Activated T-helper 1 cell treated with anti-CD3 and anti-CD28 coated beads, Interleukin-12 subunit alpha, Interleukin-12 subunit beta, Interleukin-2, Interleukin-4 antibody, amounts not matched to agents 30 ng/mL and 10 ng/mL and 1 ng/mL, durations not matched to agents 14 hours and 24 hours and 36 hours (primary cell): ENCODE measurements at regions of chr10 and their contacts with region 1.

Region 1: DNA sequence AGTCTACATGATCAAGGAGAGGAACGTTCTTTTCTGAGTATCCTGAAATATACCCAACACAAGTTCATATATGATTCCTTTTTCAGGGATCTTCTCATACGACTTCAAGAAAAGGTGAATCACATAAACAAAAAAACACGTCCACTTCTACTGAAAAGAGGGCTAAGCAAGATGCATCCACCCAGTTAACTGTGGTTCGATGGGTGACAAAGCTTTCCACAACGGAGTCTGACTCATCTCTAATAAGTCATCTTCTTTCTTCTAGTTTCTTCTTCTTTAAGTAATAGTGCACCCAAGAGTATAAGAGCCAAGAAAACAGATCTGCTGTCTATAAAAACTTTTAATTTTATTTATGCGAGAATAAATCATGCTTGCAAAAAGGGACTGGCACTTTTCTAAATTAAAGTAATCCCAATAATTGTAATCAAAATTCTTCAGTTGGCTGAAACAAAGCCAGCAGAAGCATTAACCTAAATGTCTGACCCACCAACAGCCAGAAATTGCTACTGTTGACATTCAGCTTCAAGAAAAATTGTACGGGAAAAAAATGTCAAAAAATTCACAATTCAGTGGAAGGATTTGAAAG is 146.9 kb upstream of the ANK3 start:
- DNase-seq: no peak
- H3K4me3 Mint-ChIP-seq: peak overlapping the region; percentile 45
- H3K27ac Mint-ChIP-seq: peak overlapping the region; percentile 87
- H3K4me1 Mint-ChIP-seq: peaks cover 64% of the 10 kb centered on the region
- H3K27me3 Mint-ChIP-seq: no peaks in the 10 kb centered on the region

Region 2: DNA sequence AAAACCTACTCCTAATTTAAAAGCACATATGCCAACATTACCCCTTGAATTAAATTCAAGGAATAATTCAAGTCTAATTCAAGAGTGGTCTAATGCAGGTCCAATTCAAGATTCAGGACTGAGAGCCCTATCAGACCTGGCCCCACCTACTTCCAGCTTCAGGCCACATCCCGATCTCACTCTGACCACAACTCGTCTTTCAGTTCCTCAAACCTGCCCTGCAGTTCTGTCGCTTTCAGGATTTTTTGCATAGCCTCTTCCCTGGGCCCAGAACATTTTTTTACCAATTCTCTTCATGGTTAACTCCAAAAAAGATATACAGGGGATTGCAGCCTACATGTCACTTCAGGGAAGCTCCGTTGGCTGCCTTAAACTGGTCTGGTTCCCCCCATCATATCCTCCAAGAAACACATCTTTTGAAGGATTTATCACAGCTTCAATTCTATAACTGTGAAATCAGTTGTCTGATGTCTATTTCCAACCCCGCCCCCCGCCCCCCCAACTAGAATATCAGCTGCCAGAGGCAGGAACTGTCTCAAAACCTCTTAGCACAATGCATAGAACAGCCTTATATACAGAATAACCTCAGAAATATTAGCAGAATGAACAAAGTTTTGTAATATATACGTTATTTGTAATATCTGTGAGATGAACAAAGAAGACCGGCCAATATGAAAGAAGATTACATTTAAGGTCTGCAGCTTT is 651.0 kb before region 1 on chr10:
- intact Hi-C with region 1: loop called (anchors 2 kb)
- DNase-seq: no peak
- H3K4me3 Mint-ChIP-seq: peak overlapping the region; percentile 63
- H3K27ac Mint-ChIP-seq: peak overlapping the region; percentile 94
- H3K4me1 Mint-ChIP-seq: peaks cover 88% of the 10 kb centered on the region
- H3K27me3 Mint-ChIP-seq: no peaks in the 10 kb centered on the region

Region 3: DNA sequence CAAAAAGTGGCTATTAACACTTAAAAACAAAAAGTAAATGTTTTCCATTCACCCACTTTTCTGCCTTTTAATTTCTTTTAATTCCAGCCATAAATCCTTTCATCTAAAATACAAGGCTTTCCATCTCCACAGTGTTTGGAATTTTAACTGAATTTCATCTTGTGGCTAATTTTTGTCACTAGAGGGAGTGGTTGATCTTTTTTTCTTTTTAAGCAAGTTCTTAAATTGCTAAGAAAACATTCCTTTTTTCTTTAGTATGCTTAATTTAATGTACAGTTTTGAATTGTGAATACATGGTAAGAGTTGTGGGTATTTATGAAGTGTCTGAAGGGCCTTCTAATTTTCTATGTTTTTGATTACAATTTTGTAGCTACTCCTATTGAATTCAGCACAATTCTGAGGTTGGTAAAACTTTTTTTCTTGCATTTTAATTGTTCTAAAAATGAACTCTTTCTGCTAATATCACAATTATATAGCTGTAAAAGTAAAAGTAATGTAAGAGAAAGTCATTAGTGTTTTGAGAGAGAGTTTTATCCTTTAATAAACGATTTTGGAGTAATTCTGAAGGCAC is 92.0 kb before region 1 on chr10:
- intact Hi-C with region 1: loop called (anchors 5 kb)
- DNase-seq: no peak
- H3K4me3 Mint-ChIP-seq: no peak overlapping the region
- H3K27ac Mint-ChIP-seq: no peak overlapping the region
- H3K4me1 Mint-ChIP-seq: peaks cover 16% of the 10 kb centered on the region
- H3K27me3 Mint-ChIP-seq: peaks cover 2% of the 10 kb centered on the region

Region 4: DNA sequence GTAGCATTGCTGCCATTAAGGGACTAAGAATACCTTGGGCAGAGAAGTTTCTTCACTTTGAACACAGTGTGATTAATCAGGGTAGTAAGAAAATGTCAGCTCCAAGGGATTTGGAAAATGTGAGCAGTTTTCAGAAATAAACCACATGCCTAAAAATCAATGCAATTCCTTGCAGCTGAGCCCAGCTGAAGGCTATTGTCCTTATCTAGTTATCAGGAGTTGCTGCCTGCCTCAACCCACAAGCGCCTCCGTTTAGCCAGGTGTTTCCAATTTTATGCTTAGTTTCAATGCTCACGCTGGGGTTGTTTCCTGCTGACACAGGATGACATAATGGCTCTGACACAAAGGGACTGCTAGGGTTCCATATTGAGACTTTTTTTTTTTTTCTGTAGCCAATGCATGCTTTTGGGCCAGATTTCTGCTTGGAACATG is 14.6 kb before region 1 on chr10:
- intact Hi-C with region 1: loop called (anchors 1 kb)
- DNase-seq: no peak
- H3K4me3 Mint-ChIP-seq: no peak overlapping the region
- H3K27ac Mint-ChIP-seq: peak overlapping the region; percentile 66
- H3K4me1 Mint-ChIP-seq: peaks cover 30% of the 10 kb centered on the region
- H3K27me3 Mint-ChIP-seq: no peaks in the 10 kb centered on the region

Region 5: DNA sequence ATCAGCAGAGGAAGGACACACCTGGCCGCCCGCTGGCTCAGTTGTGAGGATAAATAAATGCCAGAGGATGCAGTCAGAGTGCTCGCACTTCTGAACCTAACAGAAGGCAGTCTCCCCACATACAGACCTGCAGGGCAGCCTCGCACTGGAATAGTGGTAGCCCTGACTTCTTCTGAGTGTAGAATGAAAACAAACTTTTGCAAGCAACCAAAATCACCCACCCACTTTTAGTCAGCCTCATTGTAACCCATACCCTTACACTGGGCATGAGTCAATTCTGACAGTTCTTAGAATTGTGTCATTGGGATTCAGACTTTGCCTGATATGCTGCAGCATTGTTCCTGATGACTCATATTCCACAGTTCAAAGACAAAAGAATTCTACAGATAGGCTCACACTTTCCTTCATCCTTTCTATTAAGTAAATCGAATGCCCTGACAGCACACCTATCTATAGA is 74.7 kb after region 1 on chr10:
- intact Hi-C with region 1: loop called (anchors 1 kb)
- DNase-seq: no peak
- H3K4me3 Mint-ChIP-seq: peak overlapping the region; percentile 1
- H3K27ac Mint-ChIP-seq: peak overlapping the region; percentile 49
- H3K4me1 Mint-ChIP-seq: peaks cover 30% of the 10 kb centered on the region
- H3K27me3 Mint-ChIP-seq: no peaks in the 10 kb centered on the region

Region 6: GRCh38 chr10:60733189-60733822 is 196.7 kb after region 1 on chr10:
- intact Hi-C with region 1: loop called (anchors 2 kb)
- DNase-seq: peak; percentile 36
- H3K4me3 Mint-ChIP-seq: no peak overlapping the region
- H3K27ac Mint-ChIP-seq: no peak overlapping the region
- H3K4me1 Mint-ChIP-seq: peaks cover 48% of the 10 kb centered on the region
- H3K27me3 Mint-ChIP-seq: peaks cover 4% of the 10 kb centered on the region

Region 7: DNA sequence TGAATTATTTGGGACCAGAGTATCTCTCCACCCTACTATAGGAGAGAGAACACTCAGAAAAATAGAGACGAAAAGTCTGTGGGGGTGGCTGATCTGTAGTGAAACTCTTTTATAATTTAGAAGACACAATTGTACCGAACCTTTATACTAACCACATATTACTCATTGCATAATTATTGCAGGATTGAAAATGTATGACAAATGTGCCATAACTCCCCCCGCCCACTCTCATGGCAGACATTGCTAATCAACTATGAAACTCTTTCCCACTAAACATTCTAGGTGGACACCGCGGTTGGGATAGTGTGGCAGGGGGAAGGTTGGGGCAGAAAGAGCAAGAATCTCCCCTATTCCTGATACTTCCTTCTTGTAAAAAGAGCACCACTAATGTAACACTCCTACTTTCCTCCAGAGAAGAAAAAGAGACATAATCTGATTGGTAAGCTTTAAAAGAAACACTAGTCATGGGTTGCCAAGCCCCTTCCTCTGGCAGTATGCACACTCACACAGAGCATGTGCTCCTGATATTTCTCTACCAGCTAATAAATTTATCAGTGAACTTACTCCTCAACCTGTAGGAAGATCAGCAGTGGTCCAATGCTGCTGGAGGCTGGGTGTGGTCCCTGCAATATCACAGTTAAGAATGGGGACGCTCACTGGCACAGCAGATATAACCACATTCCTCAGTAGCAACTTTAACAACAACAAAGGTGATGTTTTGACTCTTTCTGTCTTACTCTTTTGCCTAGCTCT is 1346.2 kb after region 1 on chr10:
- intact Hi-C with region 1: loop called (anchors 10 kb)
- DNase-seq: no peak
- H3K4me3 Mint-ChIP-seq: no peak overlapping the region
- H3K27ac Mint-ChIP-seq: peak overlapping the region; percentile 44
- H3K4me1 Mint-ChIP-seq: peaks cover 19% of the 10 kb centered on the region
- H3K27me3 Mint-ChIP-seq: peaks cover 1% of the 10 kb centered on the region